Right ventricle myocardium inferior (tissue), 1 donor: ENCODE measurements at regions of chr21 and their contacts with region 1.

Region 1: DNA sequence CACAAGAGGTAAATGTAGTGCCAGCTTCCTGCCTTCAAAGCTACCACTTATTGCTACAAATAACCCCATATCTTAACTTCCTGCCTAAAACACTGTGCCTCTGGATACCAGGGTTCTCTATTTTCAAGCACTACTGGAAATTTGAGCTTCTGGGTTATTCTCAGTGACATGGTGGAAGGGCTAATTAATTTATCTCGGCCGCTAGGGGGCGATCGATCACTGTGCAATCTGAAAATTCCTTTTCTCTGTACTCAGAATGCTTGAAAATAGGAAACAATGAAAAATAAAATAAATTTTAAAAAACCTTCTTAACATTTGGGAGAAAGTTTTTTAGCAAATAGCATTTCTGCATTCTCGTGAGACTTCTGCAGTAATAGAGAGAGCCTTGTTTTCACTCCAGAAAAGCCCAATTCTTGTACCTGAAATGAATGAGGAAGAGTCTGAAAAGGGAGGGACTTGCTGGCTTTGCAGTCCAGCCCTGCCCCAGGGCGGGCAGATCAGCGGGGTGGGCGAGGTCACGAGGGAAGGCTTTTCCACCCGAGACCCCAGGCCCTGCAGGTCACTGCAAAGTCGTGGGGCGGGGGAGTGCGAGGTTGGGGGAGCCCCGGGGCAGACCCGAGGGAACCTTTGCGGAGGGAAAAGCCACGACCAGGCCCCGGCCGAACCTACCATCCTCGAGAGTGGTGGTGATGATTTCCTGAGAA is 276.7 kb downstream of the PCP4 start:
- DNase-seq: no peak
- ATAC-seq: no peak

Region 2: DNA sequence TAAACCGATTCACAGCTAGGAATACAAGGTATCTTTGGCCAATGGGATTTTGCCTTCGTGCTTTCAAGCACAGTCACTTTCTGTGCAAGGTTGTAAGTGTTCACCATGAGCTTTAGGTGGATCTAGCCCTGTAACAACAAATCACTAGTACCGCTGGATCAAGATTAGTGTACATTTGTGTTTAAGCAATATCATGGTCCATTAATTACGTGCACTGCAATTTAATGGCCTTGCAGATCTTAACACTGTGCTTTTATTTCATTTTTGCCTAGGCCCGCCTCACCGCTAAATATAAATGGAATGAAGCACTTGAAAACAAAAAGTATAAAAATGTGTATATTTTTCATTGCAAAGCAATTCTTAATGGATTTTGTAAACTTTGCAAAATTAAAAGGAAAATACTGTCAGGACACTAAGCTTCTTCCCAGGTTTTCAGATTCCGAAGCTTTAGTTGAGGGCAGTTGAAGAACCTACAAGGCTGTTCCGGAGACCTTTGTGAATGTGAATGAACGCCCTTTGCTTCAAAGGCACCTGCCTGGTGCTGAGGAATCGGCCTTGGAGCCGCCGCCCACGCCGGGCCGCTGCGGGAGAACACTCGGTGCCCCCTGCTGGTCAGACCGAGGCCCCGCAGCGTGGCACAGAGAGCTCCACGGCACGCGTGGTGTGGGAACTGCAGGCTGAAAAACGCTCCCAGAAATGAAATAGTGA is 242.1 kb after region 1 on chr21:
- intact Hi-C with region 1: loop called (anchors 1 kb)
- DNase-seq: peak; percentile 55
- ATAC-seq: peak; percentile 71

Region 3: GRCh38 chr21:40841524-40842202 is 697.7 kb after region 1 on chr21:
- intact Hi-C with region 1: loop called (anchors 5 kb)
- DNase-seq: no peak
- ATAC-seq: peak; percentile 80

Region 4: DNA sequence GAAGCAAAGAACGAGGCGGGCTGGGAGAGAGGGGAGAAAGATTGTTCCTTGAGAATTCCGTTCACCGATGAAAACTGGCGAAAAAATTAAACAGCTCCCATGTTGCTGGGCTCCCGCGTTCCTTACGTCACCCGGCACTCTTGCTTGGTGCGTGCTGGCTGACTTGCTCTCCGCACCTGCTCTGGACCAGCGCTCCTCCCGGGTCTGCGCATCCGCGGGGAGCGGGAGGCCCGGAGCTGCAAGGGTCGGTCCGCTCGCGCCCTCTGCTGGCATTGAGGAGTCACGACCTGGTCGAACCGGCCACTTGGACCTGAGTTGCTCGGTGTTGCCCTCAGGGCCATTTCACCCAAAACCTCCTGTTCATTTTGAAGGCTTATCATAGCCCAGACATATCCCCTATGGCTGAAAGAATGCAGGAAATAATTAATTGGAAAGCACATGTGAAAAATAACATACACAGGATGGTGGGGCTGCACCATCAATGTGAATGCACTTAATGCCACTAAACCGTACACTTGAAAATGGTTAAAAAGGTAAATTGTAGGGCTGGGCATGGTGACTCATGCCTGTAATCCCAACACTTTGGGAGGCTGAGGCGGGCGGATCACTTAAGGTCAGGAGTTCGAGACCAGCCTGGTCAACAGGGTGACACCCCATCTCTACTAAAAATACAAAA is 925.1 kb after region 1 on chr21:
- intact Hi-C with region 1: loop called (anchors 5 kb)
- DNase-seq: peak; percentile 88
- ATAC-seq: peak; percentile 89